PC-9 (cell line): ENCODE measurements at regions of chr10 and their contacts with region 1.

Region 1: DNA sequence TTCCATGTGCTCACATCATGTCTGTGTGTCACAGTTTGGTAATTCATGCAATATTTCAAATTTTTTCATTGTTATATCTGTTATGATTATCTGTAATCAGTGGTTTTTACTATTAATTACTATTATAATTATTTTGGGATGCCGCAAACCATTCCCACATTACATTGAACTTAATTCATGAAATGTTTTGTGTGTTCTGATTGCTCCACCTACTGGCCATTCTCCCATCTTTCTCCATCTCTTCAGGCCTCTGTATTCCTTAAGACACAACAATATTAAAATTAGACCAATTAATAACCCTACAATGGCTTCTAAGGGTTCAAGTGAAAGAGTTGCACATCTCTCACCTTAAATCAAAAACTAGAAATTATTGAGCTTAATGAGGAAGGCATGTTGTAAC is 398.5 kb downstream of the PCDH15 start:
- DNase-seq: no peak
- H3K4me3 ChIP-seq: no peak overlapping the region
- H3K27ac ChIP-seq: no peak overlapping the region
- H3K4me1 ChIP-seq: no peaks in the 10 kb centered on the region
- H3K27me3 ChIP-seq: no peaks in the 10 kb centered on the region
- CTCF ChIP-seq: peak; percentile 75

Region 2: GRCh38 chr10:52818019-52818418 is 1584.6 kb before region 1 on chr10:
- CTCF ChIA-PET with region 1: no interaction called
- POLR2A ChIA-PET with region 1: no interaction called
- intact Hi-C with region 1: loop called (anchors 10 kb)
- DNase-seq: peak; percentile 25 to 64
- H3K4me3 ChIP-seq: no peak overlapping the region
- H3K27ac ChIP-seq: no peak overlapping the region
- H3K4me1 ChIP-seq: no peaks in the 10 kb centered on the region
- H3K27me3 ChIP-seq: no peaks in the 10 kb centered on the region
- CTCF ChIP-seq: peak; percentile 79

Region 3: DNA sequence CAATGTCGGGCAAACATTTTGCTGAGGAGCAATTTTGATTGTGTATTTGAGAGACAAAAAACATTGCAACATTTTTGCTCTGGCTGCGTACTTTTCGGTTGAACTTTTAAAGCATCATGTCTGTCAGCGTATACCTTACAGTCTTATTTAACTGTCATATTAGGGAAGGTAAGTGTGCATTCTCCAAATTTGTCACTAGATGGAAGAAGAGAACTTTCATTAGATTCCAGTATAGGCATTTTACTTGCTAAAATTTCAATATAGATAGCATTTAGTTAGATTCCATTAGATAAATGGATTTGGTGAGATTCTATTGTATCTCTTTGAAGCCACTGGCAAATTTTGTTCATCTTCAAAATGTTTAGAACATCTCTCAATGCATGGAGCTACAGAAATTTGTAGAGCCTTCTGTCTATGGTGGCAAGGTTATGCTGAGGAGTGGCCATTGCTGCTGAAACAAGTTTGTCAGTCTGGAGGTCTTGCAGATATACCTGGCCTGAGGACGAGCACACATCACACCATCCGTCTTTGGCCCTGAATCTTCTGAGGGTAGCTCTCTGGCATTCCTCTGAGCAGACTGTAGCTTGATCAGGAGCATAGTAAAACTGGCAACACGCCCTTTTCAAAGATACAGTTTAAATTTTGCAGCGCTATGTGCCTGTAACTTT is 1192.5 kb before region 1 on chr10:
- CTCF ChIA-PET with region 1: no interaction called
- POLR2A ChIA-PET with region 1: no interaction called
- intact Hi-C with region 1: loop called (anchors 2 kb)
- DNase-seq: peak in 1 of 2 experiments; percentile 33
- H3K4me3 ChIP-seq: no peak overlapping the region
- H3K27ac ChIP-seq: no peak overlapping the region
- H3K4me1 ChIP-seq: no peaks in the 10 kb centered on the region
- H3K27me3 ChIP-seq: no peaks in the 10 kb centered on the region
- CTCF ChIP-seq: peak; percentile 76

Region 4: GRCh38 chr10:53601260-53601875 is 801.2 kb before region 1 on chr10:
- CTCF ChIA-PET with region 1: no interaction called
- POLR2A ChIA-PET with region 1: no interaction called
- intact Hi-C with region 1: loop called (anchors 5 kb)
- DNase-seq: peak in 1 of 2 experiments; percentile 39
- H3K4me3 ChIP-seq: no peak overlapping the region
- H3K27ac ChIP-seq: no peak overlapping the region
- H3K4me1 ChIP-seq: no peaks in the 10 kb centered on the region
- H3K27me3 ChIP-seq: no peaks in the 10 kb centered on the region
- CTCF ChIP-seq: peak; percentile 91

Region 5: GRCh38 chr10:53839440-53840039 is 563.0 kb before region 1 on chr10:
- CTCF ChIA-PET with region 1: no interaction called
- POLR2A ChIA-PET with region 1: no interaction called
- intact Hi-C with region 1: loop called (anchors 5 kb)
- DNase-seq: no peak
- H3K4me3 ChIP-seq: no peak overlapping the region
- H3K27ac ChIP-seq: no peak overlapping the region
- H3K4me1 ChIP-seq: no peaks in the 10 kb centered on the region
- H3K27me3 ChIP-seq: no peaks in the 10 kb centered on the region
- CTCF ChIP-seq: peak; percentile 69

Region 6: DNA sequence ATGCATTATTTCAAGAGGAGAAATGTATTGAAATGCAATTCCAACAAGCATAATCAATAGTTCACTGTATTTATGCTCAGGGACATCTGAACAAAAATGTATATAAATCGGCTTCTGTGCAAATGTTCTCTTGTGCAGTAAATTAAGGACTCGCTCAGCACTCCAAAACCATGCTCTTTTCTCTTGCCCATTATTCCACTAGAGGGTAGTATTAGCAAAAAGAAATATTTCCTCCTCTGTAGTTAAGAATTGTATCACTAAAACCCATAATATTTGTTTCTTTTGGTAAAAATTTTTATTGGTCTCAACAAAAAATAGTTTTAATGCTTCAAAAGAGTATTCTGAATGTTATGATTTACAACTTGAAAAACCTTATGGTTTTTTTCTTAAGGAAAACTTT is 404.6 kb before region 1 on chr10:
- CTCF ChIA-PET with region 1: no interaction called
- POLR2A ChIA-PET with region 1: no interaction called
- intact Hi-C with region 1: loop called (anchors 10 kb)
- DNase-seq: no peak
- H3K4me3 ChIP-seq: no peak overlapping the region
- H3K27ac ChIP-seq: no peak overlapping the region
- H3K4me1 ChIP-seq: no peaks in the 10 kb centered on the region
- H3K27me3 ChIP-seq: no peaks in the 10 kb centered on the region
- CTCF ChIP-seq: peak; percentile 45